SK-N-SH (cell line): ENCODE measurements at regions of chr1 and their contacts with region 1.

Region 1: DNA sequence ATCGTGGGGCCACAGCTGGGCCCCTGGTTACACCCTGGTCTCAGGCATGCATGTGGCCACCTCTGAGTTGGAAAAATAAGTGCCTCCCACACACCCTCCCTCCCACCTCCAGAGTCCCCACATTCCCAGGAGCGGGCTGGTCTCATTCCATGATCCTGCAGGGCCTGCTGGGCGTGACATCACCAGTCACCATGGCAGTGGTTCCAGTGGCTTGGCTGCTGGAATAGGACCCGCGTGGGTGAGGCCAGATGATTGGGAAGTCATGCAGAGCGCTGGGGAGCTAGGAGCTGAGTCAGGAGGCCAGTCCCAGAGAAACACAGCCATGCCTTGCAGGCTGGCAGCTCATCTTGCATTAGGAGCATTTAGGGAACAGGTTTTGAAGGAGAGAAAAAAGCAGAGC is 125.4 kb upstream of the TMEM51 start:
- DNase-seq: no peak
- H3K4me3 ChIP-seq: no peak overlapping the region
- H3K27ac ChIP-seq: no peak overlapping the region
- H3K4me1 ChIP-seq: no peaks in the 10 kb centered on the region
- H3K27me3 ChIP-seq: no peaks in the 10 kb centered on the region
- CTCF ChIP-seq: no peak
- EP300 ChIP-seq: no peak
- RAD21 ChIP-seq: no peak

Region 2: GRCh38 chr1:14915356-14916054 is 112.6 kb before region 1 on chr1:
- CTCF ChIA-PET with region 1: interaction called, 32 read pairs
- POLR2A ChIA-PET with region 1: no interaction called
- DNase-seq: peak; percentile 84
- H3K4me3 ChIP-seq: no peak overlapping the region; a peak in 1 of 4 replicates
- H3K27ac ChIP-seq: no peak overlapping the region
- H3K4me1 ChIP-seq: peaks cover 0 to 7% of the 10 kb centered on the region in 2 experiments; a peak in 1 of 4 replicates
- H3K27me3 ChIP-seq: no peaks in the 10 kb centered on the region
- CTCF ChIP-seq: peak; percentile 92
- EP300 ChIP-seq: no peak
- RAD21 ChIP-seq: peak; percentile 70

Region 3: GRCh38 chr1:14945132-14946016 is 82.7 kb before region 1 on chr1:
- CTCF ChIA-PET with region 1: interaction called, 12 read pairs
- POLR2A ChIA-PET with region 1: no interaction called
- DNase-seq: peak; percentile 85
- H3K4me3 ChIP-seq: peak overlapping the region; percentile 46 to 56
- H3K27ac ChIP-seq: peak overlapping the region; percentile 96
- H3K4me1 ChIP-seq: peaks cover 41 to 53% of the 10 kb centered on the region in 2 experiments
- H3K27me3 ChIP-seq: no peaks in the 10 kb centered on the region
- CTCF ChIP-seq: no peak
- EP300 ChIP-seq: peak; percentile 73 to 86
- RAD21 ChIP-seq: peak; percentile 16; the same call in 1 of the 2 replicates

Region 4: GRCh38 chr1:14987829-14988603 is 40.1 kb before region 1 on chr1:
- CTCF ChIA-PET with region 1: interaction called, 13 read pairs
- POLR2A ChIA-PET with region 1: no interaction called
- DNase-seq: peak; percentile 61
- H3K4me3 ChIP-seq: no peak overlapping the region
- H3K27ac ChIP-seq: no peak overlapping the region
- H3K4me1 ChIP-seq: peaks cover 0 to 10% of the 10 kb centered on the region in 2 experiments; a peak in 1 of 4 replicates
- H3K27me3 ChIP-seq: no peaks in the 10 kb centered on the region
- CTCF ChIP-seq: no peak
- EP300 ChIP-seq: no peak
- RAD21 ChIP-seq: no peak

Region 5: GRCh38 chr1:15016526-15016925 is 11.6 kb before region 1 on chr1:
- CTCF ChIA-PET with region 1: interaction called, 11 read pairs
- POLR2A ChIA-PET with region 1: no interaction called
- DNase-seq: no peak
- H3K4me3 ChIP-seq: no peak overlapping the region
- H3K27ac ChIP-seq: no peak overlapping the region
- H3K4me1 ChIP-seq: no peaks in the 10 kb centered on the region; a peak in 1 of 4 replicates
- H3K27me3 ChIP-seq: no peaks in the 10 kb centered on the region
- CTCF ChIP-seq: no peak
- EP300 ChIP-seq: no peak
- RAD21 ChIP-seq: no peak

Region 6: DNA sequence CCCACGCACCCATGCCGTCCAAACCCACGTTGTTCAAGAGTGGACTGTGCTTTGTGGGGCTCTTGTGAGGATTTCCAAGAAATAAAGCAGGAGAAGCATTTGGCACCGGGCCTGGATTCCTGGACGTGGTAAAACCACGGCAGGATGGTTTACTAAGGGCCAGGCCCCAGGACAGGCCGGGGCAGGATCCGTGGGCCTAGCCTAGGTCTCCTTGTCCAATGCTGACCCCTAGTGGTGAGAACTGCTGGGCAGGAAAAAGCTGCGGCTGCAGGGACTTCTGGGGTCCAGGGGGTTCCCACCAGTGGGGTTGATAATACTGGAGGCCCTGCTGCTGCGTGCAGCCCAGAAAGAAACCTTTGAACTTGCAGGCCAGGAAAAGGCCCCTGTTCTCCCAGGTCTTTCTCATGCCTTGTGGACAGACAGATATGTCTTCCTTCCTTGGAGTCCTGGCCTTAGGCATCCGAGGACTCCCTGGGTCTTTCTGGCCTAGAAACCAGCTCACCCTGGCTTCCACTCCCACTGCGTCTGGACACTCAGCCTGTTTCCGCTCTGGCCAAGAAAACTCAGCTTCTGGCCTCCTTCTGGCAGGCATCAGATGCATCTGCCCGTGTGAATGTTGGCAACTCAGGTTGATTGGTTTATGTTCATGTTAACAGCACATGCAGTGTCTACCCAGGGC is 18.5 kb after region 1 on chr1:
- CTCF ChIA-PET with region 1: interaction called, 16 read pairs
- POLR2A ChIA-PET with region 1: no interaction called
- DNase-seq: peak; percentile 94
- H3K4me3 ChIP-seq: no peak overlapping the region; a peak in 1 of 4 replicates
- H3K27ac ChIP-seq: peak overlapping the region; percentile 29 to 31; a peak in 3 of 4 replicates
- H3K4me1 ChIP-seq: peaks cover 0 to 3% of the 10 kb centered on the region in 2 experiments; a peak in 1 of 4 replicates
- H3K27me3 ChIP-seq: no peaks in the 10 kb centered on the region
- CTCF ChIP-seq: peak; percentile 98
- EP300 ChIP-seq: no peak
- RAD21 ChIP-seq: peak; percentile 94